Gastrocnemius medialis (tissue), 4 donors: ENCODE measurements at regions of chr16 and their contacts with region 1.

Region 1: DNA sequence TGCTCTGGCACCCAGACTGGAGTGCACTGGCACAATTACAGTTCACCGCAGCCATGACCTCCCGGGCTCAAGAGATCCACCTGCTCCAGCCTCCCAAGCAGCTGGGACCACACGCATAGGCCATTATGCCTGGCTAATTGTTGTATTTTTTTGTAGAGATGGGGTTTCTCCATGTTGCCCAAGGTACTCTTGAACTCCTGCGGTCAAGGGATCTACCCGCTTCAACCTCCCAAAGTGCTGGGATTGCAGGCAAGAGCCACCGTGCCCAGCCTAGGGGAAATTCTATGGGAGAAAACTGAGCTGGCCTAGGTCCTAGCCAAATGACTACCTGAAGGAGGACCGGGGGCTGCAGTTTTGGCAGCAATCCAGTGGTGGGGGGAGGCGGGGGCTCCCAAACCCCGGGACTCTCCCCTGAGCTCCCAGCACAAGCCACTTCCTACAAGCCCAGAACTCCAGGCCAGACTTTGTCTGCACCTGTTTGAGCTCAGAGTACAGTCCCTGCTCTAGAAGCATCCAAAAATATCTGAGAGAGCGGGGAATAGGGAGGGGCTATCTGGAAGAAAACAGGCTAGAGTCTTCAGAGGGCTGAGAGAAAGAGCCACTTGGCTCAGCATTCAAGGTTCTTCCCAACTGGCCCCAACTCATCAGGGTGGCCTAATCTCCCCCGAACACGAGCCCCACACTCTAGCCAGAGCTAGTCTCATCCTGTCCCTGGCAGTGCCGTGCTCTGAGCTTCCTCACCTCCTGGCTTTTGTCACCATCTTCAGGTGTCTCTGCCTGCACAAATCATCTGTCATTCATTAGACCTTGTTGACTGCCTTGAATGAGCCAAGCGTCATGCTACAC is 9.1 kb downstream of the SRL start:
- DNase-seq: peak; percentile 86 to 96
- ATAC-seq: peak; percentile 80 to 87
- H3K4me3 ChIP-seq: peak overlapping the region; percentile 26 to 38 (median 34)
- H3K27ac ChIP-seq: peak overlapping the region; percentile 89 to 99 (median 98)
- H3K4me1 ChIP-seq: peaks cover 55 to 85% of the 10 kb centered on the region in 2 donors
- H3K27me3 ChIP-seq: no peaks in the 10 kb centered on the region
- CTCF ChIP-seq: peak in 1 of 5 experiments; percentile 15
- POLR2A ChIP-seq: peak; percentile 63 to 70

Region 2: DNA sequence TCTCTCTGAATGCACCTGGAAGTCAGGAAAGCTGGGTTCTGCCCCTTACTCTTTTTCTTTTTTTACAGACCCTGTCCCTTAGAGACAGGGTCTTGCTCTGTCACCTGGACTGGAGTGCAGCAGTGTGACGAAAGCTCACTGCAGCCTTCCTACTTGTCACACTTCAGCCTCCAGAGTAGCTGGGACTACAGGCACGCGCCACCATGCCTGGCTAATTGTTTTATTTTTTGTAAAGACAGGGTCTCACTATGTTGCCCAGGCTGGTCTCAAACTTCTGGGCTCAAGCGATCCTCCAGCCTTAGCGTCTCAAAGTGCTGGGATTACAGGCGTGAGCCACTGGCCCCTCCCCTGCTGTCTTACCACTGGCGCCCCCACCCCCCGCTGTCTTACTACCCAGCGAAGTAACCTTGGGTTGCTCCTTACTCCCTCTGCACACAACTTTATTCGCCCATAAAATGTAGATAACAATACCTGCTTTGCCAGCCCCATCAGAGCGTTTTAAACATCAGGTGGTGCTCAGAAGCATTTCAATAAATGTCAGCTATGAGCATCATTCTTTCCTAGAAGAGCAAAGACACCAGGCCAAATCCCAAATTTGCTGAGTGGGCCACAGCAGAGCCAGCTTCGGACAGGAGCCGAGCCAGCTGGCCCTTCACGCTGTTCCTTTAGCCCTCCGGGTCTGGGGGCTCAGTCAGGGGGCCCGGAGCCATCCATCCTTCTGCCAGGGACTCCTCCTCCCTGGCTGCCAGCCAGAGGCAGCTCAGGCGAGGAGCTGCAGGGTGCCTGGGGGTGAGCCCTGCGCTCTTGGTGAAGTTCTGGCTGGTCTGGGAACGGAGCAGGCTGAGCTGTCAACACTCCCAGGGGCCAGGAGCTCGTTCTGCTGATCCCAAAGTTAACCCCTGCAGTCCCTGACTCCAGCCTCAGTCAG is 15.3 kb before region 1 on chr16:
- in situ Hi-C with region 1: no loop called
- intact Hi-C with region 1: loop called (anchors 1 kb)
- DNase-seq: peak in 1 of 2 donors; percentile 84
- ATAC-seq: peak; percentile 16 to 22
- H3K4me3 ChIP-seq: peak overlapping the region; percentile 43 to 51 (median 48)
- H3K27ac ChIP-seq: peak overlapping the region; percentile 91 to 100 (median 98)
- H3K4me1 ChIP-seq: peaks cover 88 to 89% of the 10 kb centered on the region in 2 donors
- H3K27me3 ChIP-seq: no peaks in the 10 kb centered on the region
- CTCF ChIP-seq: no peak
- POLR2A ChIP-seq: peak; percentile 12 to 22